ENCODE measurements at regions of chr10 and their contacts with region 1.

Region 1: GRCh38 chr10:24724381-24725228 is 918 bp upstream of the ARHGAP21 start:
- DNase-seq: peak; percentile 99
- ATAC-seq: peak; percentile 94

Region 2: GRCh38 chr10:24642622-24643417 is 81.8 kb before region 1 on chr10:
- intact Hi-C with region 1: loop called (anchors 5 kb)
- DNase-seq: no peak
- ATAC-seq: peak; percentile 89

Region 3: GRCh38 chr10:24952707-24953645 is 228.4 kb after region 1 on chr10:
- intact Hi-C with region 1: loop called (anchors 5 kb)
- DNase-seq: peak; percentile 73
- ATAC-seq: peak; percentile 48

Region 4: GRCh38 chr10:24989867-24990266 is 265.3 kb after region 1 on chr10:
- intact Hi-C with region 1: loop called (anchors 10 kb)
- DNase-seq: no peak
- ATAC-seq: no peak

Region 5: GRCh38 chr10:25016376-25017154 is 292.0 kb after region 1 on chr10 and contains the start of gene THNSL1:
- intact Hi-C with region 1: loop called (anchors 1 kb)
- DNase-seq: peak; percentile 99
- ATAC-seq: peak; percentile 100
- total RNA-seq, gene THNSL1: 6.5 TPM